PC-9 (cell line): ENCODE measurements at regions of chr3 and their contacts with region 1.

Region 1: GRCh38 chr3:36677331-36678007 is 86.9 kb downstream of the DCLK3 start:
- DNase-seq: peak; percentile 78 to 99
- H3K4me3 ChIP-seq: no peak overlapping the region
- H3K27ac ChIP-seq: peak overlapping the region; percentile 98
- H3K4me1 ChIP-seq: peaks cover 33% of the 10 kb centered on the region
- H3K27me3 ChIP-seq: no peaks in the 10 kb centered on the region
- CTCF ChIP-seq: 0 out of 2 replicates have a peak, but pooled peaks have one; percentile 37

Region 2: DNA sequence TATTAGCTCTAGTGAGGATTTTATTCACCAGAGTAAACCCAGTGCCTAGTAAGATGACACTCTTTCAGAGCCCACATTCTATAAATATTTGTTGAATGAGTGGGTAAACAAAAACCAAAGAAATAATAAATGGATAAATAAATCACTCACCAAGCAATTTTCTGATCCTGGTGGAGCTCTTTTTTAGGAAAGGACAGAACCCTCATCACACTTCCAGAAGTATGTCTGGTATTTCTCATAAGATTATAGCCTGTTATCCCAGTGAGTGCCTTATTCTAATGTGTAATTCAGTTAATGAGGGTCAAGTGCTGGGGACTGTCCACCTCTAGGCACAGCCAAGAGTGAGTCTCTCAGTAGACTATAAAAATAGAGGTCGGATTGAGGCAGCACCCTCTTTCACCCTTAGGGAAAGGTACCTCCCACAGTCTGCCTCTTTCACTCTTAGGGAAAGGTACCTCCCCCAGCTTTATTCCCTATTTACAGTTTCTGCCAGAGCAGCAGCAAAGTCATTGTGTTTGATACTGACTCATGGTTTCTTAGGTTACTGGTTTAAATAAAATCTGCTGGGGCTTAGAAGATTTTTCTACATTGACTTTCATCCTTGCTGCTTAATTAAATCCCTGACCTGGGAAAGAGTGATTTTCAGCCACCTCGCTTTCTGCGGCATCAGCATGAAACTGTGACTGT is 152.2 kb before region 1 on chr3:
- CTCF ChIA-PET with region 1: no interaction called
- POLR2A ChIA-PET with region 1: no interaction called
- intact Hi-C with region 1: loop called (anchors 1 kb)
- DNase-seq: peak; percentile 34 to 81
- H3K4me3 ChIP-seq: no peak overlapping the region
- H3K27ac ChIP-seq: peak overlapping the region; percentile 87
- H3K4me1 ChIP-seq: peaks cover 16% of the 10 kb centered on the region
- H3K27me3 ChIP-seq: no peaks in the 10 kb centered on the region
- CTCF ChIP-seq: no peak

Region 3: GRCh38 chr3:36648241-36649034 is 29.0 kb before region 1 on chr3:
- CTCF ChIA-PET with region 1: no interaction called
- POLR2A ChIA-PET with region 1: no interaction called
- intact Hi-C with region 1: loop called (anchors 1 kb)
- DNase-seq: peak; percentile 22 to 93
- H3K4me3 ChIP-seq: peak overlapping the region; percentile 2; the same call in 1 of the 2 replicates
- H3K27ac ChIP-seq: peak overlapping the region; percentile 95
- H3K4me1 ChIP-seq: peaks cover 34% of the 10 kb centered on the region
- H3K27me3 ChIP-seq: no peaks in the 10 kb centered on the region
- CTCF ChIP-seq: no peak